Transverse colon (tissue), 4 donors: ENCODE measurements at regions of chr19 and their contacts with region 1.

Region 1: DNA sequence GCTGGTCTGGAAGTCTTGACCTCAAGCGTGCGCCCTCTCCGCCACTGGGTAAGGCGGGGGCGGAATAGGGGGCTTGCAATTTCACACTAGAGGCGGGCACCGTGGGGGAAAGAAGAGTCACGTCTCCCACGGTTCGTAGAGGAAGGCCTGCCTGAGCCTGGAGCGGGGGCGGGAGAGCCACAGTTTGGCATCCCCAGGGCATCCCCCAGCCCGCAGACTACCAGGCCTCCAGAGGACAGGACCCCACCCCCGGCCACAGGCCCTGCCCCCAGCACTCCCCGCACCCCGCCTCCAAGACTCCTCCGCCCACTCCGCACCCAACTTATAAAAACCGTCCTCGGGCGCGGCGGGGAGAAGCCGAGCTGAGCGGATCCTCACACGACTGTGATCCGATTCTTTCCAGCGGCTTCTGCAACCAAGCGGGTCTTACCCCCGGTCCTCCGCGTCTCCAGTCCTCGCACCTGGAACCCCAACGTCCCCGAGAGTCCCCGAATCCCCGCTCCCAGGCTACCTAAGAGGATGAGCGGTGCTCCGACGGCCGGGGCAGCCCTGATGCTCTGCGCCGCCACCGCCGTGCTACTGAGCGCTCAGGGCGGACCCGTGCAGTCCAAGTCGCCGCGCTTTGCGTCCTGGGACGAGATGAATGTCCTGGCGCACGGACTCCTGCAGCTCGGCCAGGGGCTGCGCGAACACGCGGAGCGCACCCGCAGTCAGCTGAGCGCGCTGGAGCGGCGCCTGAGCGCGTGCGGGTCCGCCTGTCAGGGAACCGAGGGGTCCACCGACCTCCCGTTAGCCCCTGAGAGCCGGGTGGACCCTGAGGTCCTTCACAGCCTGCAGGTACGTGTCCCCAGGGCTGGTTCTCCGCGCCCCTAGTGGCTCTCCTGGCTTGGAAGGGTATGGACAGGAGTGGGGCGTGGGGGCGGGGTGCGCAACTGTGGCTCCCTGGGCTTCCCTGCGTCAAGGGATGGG is at the start of gene ANGPTL4:
- DNase-seq: peak; percentile 78
- H3K4me3 ChIP-seq: peak within 1 kb of the TSS; percentile 28 to 72 (median 52)
- H3K27ac ChIP-seq: peak within 1 kb of the TSS; percentile 76 to 94 (median 84)
- H3K4me1 ChIP-seq: peaks cover 30 to 74% (median 56%) of the 10 kb centered on the region in 4 donors
- H3K27me3 ChIP-seq: peaks cover 29% of the 10 kb centered on the region
- CTCF ChIP-seq: peak in 4 of 5 experiments; percentile 10 to 29 (median 20)
- EP300 ChIP-seq: no peak
- POLR2A ChIP-seq: peak; percentile 62
- total RNA-seq, gene ANGPTL4: 2.3 to 123 (median 10.3) TPM

Region 2: DNA sequence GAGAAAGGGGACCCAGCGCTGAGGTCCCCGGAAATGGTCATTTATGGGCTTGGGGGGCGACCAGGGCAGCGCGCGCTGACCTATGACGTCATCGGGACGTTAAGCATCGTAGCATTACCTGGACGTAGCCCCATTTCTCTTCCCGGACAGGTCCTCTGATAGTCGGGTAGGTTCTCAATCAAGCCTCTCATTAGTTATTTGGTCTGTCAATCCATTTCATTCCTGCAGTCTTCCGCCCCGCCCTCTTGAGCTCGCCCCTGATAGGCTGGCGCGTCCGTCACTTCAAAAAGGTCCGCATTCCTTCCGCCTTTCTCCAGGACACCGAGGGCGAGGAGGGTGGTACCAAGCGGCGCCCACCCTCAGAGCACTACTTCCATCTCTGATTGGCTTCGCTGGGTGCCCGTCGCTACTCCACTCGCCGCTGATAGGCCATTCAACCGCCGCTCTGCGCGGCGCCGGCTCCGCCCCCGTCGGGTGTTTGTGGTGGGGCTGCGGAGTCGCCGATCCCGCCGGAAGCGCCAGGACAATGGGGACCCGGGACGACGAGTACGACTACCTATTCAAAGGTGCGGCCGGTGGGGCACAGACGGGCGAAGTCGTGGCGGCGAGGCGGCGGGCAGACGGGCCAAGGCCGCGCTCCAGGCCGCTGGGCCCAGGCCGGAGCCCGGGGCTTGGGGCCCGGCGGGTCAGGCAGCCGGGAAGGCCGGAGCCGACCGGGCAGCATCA is 26.0 kb after region 1 on chr19 and contains the start of gene RAB11B:
- in situ Hi-C with region 1: no loop called
- intact Hi-C with region 1: loop called (anchors 1 kb)
- DNase-seq: peak; percentile 100
- H3K4me3 ChIP-seq: peak within 1 kb of the TSS; percentile 86 to 100 (median 95)
- H3K27ac ChIP-seq: peak within 1 kb of the TSS; percentile 99 to 100 (median 100)
- H3K4me1 ChIP-seq: peaks cover 17 to 45% (median 27%) of the 10 kb centered on the region in 4 donors
- H3K27me3 ChIP-seq: no peaks in the 10 kb centered on the region
- CTCF ChIP-seq: no peak
- EP300 ChIP-seq: no peak
- POLR2A ChIP-seq: peak; percentile 58
- total RNA-seq, gene RAB11B: 48.6 to 159 (median 56.1) TPM

Region 3: DNA sequence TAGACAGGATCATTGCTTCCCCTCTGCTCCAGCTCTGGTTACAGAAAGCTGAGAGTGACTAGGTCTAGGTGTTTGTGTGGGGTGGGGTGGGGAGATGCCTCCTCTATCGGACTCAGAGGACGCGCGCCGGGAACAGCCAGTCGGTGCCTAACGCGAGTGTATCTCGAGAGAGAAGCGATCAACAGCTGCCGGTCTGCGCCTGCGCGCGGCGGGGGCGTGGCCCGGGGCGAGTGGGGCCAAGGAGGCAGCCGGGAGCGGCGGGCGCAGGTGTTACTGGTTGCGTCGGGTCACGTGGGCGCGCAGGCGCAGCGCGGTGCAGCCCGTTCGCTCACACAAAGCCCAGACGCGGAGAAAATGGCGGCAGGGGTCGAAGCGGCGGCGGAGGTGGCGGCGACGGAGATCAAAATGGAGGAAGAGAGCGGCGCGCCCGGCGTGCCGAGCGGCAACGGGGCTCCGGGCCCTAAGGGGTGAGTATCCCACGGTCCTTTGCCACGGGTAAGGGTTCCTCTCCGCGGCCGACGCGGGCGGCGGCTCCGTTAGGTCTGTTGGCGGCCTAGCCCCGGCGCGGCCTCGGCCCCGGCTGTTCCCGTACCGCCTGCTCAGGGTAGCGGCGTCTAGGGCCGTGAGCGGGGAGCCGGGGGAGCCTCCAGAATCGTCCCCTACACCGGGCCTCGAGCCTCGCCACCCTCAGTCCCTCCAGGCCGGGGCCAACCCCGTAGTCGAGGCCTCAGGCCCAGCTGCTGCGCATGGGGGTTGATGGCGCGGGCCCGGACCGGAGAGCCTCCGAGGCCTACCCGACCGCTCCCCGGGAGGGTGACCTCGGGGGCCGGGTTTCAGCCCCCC is 80.8 kb after region 1 on chr19 and contains the start of gene HNRNPM:
- in situ Hi-C with region 1: no loop called
- intact Hi-C with region 1: loop called (anchors 10 kb)
- DNase-seq: peak; percentile 100
- H3K4me3 ChIP-seq: peak within 1 kb of the TSS; percentile 92 to 99 (median 96)
- H3K27ac ChIP-seq: peak within 1 kb of the TSS; percentile 95 to 99 (median 96)
- H3K4me1 ChIP-seq: peaks cover 29 to 48% (median 42%) of the 10 kb centered on the region in 4 donors
- H3K27me3 ChIP-seq: no peaks in the 10 kb centered on the region
- CTCF ChIP-seq: no peak
- EP300 ChIP-seq: no peak
- POLR2A ChIP-seq: peak; percentile 97
- total RNA-seq, gene HNRNPM: 72.2 to 164 (median 101) TPM